Naive thymus-derived CD4-positive, alpha-beta T cell (primary cell): ENCODE measurements at regions of chr13 and their contacts with region 1.

Region 1: DNA sequence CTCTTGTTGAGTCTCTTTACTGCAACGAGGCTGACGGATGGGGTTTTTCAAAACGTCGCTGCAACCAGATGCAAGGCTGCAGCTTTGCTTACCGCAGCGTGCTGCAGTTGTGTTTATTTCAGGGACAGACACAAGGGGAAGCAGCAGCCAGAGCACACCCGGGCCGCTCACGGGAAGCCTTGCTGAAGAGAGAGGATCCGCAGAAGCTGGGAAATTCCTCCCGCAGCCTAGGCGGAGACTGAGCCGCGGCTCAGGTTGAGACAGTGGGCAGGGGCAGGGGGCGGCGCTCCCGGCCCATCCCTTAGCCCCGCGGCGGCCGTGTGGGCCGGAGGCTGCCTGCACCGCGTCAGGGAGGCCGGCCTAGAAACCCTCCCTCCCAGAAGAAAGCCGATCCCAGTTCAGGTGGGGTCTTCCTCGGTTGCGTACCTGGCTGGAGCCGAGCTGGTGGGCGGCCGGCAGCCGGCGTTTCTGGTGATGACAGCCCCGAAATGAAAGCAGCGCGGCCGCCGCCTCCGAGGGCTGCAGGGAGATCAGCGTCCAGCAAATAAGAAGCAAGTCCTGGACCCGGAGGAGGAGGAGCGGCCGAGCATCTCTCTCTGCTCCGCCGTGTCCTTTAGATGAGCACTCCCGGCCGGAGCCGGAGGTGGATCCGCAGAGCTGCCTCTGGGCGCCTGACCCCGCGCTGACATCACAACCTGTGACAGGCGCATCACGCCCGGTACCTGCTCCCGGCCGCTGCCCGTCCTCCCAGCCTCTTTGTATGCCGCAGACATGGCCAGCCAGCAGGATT is at the start of gene FRY:
- DNase-seq: peak; percentile 34 to 67 (median 58)
- ATAC-seq: peak; percentile 86
- H3K4me3 ChIP-seq: peak within 1 kb of the TSS; percentile 71
- H3K4me3 Mint-ChIP-seq: peak within 1 kb of the TSS; percentile 82 to 99 (median 90)
- H3K27ac ChIP-seq: peak within 1 kb of the TSS; percentile 72
- H3K27ac Mint-ChIP-seq: peak within 1 kb of the TSS; percentile 77 to 97 (median 83)
- H3K4me1 ChIP-seq: peaks cover 3 to 16% of the 10 kb centered on the region in 2 donors
- H3K4me1 Mint-ChIP-seq: peaks cover 7 to 65% (median 49%) of the 10 kb centered on the region in 7 donors
- H3K27me3 ChIP-seq: no peaks in the 10 kb centered on the region
- H3K27me3 Mint-ChIP-seq: peaks cover 7 to 49% (median 13%) of the 10 kb centered on the region in 5 donors
- total RNA-seq, gene FRY: 9.9 to 39.9 (median 24.0) TPM

Region 2: DNA sequence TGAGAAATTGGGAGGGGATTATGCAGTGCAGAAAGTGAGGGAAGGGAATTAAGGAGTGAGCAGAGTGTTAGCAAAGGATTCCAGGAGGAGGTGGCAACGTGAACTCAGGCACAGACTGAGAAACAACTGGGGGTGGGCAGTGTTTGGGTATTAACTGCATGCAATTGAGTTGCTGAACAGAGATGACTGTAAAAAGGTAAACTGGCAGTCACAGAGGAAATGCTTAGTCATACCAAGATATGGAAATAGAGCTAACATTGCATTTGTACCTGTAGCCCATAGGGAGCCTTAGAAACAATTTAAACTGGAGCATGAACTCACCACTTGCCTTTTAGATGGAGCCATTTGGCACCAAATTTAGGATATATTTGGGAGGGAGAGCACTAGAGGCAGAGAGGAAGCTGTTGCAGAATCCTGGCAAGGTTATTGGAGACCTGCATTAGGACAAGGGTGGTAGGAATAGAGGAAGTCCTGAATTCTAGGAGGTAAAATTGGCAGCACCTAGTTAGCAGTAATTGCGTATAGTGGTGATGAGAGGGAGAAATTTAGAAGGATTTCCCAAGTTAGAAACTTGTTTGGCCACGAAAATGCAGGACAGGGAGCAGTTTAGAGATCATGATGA is 100.2 kb before region 1 on chr13:
- CTCF ChIA-PET with region 1: no interaction called
- POLR2A ChIA-PET with region 1: no interaction called
- intact Hi-C with region 1: loop called in 1 of 2 experiments (anchors 5 kb)
- DNase-seq: peak in 1 of 9 donors; percentile 24
- ATAC-seq: no peak
- H3K4me3 ChIP-seq: no peak overlapping the region
- H3K4me3 Mint-ChIP-seq: no peak overlapping the region
- H3K27ac ChIP-seq: no peak overlapping the region
- H3K27ac Mint-ChIP-seq: no peak overlapping the region
- H3K4me1 ChIP-seq: peaks cover 0 to 4% of the 10 kb centered on the region in 2 donors
- H3K4me1 Mint-ChIP-seq: peaks cover 0 to 22% (median 0%) of the 10 kb centered on the region in 7 donors
- H3K27me3 ChIP-seq: no peaks in the 10 kb centered on the region
- H3K27me3 Mint-ChIP-seq: peaks cover 0 to 19% (median 6%) of the 10 kb centered on the region in 5 donors

Region 3: DNA sequence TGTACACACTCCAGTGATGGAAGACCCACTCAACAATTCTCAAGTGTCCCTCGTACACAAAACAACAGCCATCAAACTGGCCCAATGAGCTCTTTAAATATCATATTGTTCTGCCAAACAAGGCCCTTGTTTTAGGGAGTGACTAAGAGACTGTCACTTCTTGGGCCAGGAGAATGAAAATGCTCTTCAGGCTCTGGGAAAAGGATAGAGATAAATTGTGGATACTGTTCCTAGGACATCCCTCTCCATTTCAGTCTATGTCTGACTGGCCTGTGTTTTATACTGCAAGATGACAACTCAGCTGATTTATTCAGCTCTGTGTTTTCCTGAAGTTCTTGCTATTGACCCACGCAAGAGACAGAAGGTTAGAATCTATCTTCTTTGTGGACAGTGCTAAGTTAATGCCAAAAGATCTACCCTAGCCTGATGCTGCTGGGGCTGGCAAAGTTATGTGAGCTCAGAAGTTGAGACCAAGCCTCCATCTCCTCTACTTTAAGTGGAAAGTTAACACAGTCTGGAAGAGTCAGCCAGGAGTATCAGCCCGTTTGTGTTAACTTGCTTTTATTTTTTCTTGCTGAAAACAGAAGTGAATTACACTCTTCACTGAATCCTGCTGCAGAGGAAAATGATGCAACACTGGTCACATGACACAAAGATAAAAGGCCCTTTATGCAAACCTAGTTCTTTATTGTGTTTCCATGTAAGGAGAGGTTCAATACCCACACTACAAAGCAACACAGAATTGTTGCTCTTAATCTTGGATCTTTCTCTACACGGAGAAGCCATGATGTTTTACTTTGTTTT is 15.0 kb after region 1 on chr13:
- CTCF ChIA-PET with region 1: interaction called, 4 read pairs
- POLR2A ChIA-PET with region 1: interaction called, 23 read pairs
- intact Hi-C with region 1: loop called (anchors 1 to 2 kb)
- DNase-seq: peak in 6 of 9 donors; percentile 24 to 55 (median 51)
- ATAC-seq: peak; percentile 65
- H3K4me3 ChIP-seq: no peak overlapping the region
- H3K4me3 Mint-ChIP-seq: peak overlapping the region in 9 of 10 donors; percentile 20 to 72 (median 65)
- H3K27ac ChIP-seq: no peak overlapping the region
- H3K27ac Mint-ChIP-seq: peak overlapping the region; percentile 23 to 86 (median 76)
- H3K4me1 ChIP-seq: peaks cover 0 to 48% of the 10 kb centered on the region in 2 donors
- H3K4me1 Mint-ChIP-seq: peaks cover 10 to 79% (median 62%) of the 10 kb centered on the region in 7 donors
- H3K27me3 ChIP-seq: no peaks in the 10 kb centered on the region
- H3K27me3 Mint-ChIP-seq: peaks cover 0 to 15% (median 0%) of the 10 kb centered on the region in 5 donors

Region 4: DNA sequence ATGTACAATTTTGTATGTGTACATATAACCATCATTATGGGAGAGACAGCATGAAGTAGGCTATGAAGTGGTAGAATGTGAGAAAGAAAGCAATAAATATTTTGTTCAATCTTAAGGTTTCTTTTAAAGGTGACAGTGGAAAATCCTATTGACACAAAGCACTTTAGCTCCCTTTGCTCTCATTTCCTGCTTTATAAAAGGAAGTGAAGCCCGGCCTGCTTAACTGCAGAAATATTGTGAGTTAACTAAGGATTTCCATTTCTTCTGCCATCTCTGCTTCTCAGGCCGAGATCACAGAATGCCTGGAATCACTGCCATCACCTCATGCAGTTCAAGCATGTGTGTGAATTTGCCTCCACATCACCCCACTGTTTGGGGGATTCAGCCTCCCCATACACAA is 83.8 kb after region 1 on chr13:
- CTCF ChIA-PET with region 1: no interaction called
- POLR2A ChIA-PET with region 1: interaction called, 3 read pairs
- intact Hi-C with region 1: loop called in 1 of 2 experiments (anchors 2 kb)
- DNase-seq: peak in 2 of 9 donors; percentile 2 to 3
- ATAC-seq: no peak
- H3K4me3 ChIP-seq: no peak overlapping the region
- H3K4me3 Mint-ChIP-seq: peak overlapping the region in 3 of 10 donors; percentile 16 to 53 (median 19)
- H3K27ac ChIP-seq: no peak overlapping the region
- H3K27ac Mint-ChIP-seq: peak overlapping the region in 2 of 9 donors; percentile 11 to 63
- H3K4me1 ChIP-seq: peaks cover 0 to 3% of the 10 kb centered on the region in 2 donors
- H3K4me1 Mint-ChIP-seq: peaks cover 0 to 34% (median 23%) of the 10 kb centered on the region in 7 donors
- H3K27me3 ChIP-seq: no peaks in the 10 kb centered on the region
- H3K27me3 Mint-ChIP-seq: no peaks in the 10 kb centered on the region

Region 5: GRCh38 chr13:32164622-32165268 is 133.5 kb after region 1 on chr13:
- CTCF ChIA-PET with region 1: no interaction called
- POLR2A ChIA-PET with region 1: no interaction called
- intact Hi-C with region 1: loop called in 1 of 2 experiments (anchors 2 kb)
- DNase-seq: peak in 6 of 9 donors; percentile 3 to 47 (median 32)
- ATAC-seq: peak; percentile 63
- H3K4me3 ChIP-seq: no peak overlapping the region
- H3K4me3 Mint-ChIP-seq: no peak overlapping the region
- H3K27ac ChIP-seq: no peak overlapping the region
- H3K27ac Mint-ChIP-seq: peak overlapping the region in 2 of 9 donors; percentile 14 to 17
- H3K4me1 ChIP-seq: no peaks in the 10 kb centered on the region
- H3K4me1 Mint-ChIP-seq: peaks cover 0 to 2% (median 0%) of the 10 kb centered on the region in 7 donors
- H3K27me3 ChIP-seq: no peaks in the 10 kb centered on the region
- H3K27me3 Mint-ChIP-seq: no peaks in the 10 kb centered on the region

Region 6: DNA sequence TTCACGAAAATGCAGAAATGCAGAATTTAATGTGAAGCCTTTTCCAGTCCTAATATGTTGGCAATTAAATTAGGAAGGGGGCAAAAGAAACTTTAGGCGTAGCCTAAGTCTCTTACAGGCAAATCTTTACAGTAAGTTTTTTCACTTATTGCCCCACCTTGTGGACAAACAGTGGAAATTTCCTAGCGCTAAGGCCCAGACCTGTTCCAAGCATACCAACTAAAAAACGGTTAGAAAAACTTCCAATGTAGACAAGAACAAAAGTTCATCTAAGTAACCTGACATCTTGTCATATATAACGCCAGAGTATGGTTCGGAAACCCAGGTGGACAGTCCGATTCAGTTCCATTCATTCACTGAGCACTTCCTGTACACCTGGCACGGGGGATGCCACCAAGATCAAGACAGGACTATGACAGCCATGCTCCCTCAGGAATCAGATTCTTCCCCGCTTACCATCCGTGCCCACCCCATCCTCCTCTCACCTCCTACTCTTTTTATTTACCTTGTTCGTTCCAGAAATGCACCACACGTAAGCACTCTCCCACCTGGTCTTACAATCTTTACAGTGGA is 279.0 kb after region 1 on chr13:
- CTCF ChIA-PET with region 1: no interaction called
- POLR2A ChIA-PET with region 1: interaction called, 5 read pairs
- intact Hi-C with region 1: loop called in 1 of 2 experiments (anchors 1 kb)
- DNase-seq: peak in 7 of 9 donors; percentile 16 to 64 (median 51)
- ATAC-seq: peak; percentile 58
- H3K4me3 ChIP-seq: no peak overlapping the region
- H3K4me3 Mint-ChIP-seq: peak overlapping the region in 7 of 10 donors; percentile 10 to 61 (median 28)
- H3K27ac ChIP-seq: no peak overlapping the region
- H3K27ac Mint-ChIP-seq: peak overlapping the region in 1 of 9 donors; percentile 18
- H3K4me1 ChIP-seq: peaks cover 5 to 7% of the 10 kb centered on the region in 2 donors
- H3K4me1 Mint-ChIP-seq: peaks cover 13 to 28% (median 14%) of the 10 kb centered on the region in 7 donors
- H3K27me3 ChIP-seq: no peaks in the 10 kb centered on the region
- H3K27me3 Mint-ChIP-seq: peaks cover 0 to 2% (median 0%) of the 10 kb centered on the region in 5 donors

Region 7: GRCh38 chr13:32427852-32428580 is 396.8 kb after region 1 on chr13 and contains the start of gene N4BP2L1:
- CTCF ChIA-PET with region 1: no interaction called
- POLR2A ChIA-PET with region 1: no interaction called
- intact Hi-C with region 1: loop called (anchors 5 kb)
- DNase-seq: peak; percentile 60 to 91 (median 78)
- ATAC-seq: peak; percentile 81
- H3K4me3 ChIP-seq: peak within 1 kb of the TSS; percentile 64
- H3K4me3 Mint-ChIP-seq: peak within 1 kb of the TSS; percentile 90 to 100 (median 94)
- H3K27ac ChIP-seq: peak within 1 kb of the TSS; percentile 98
- H3K27ac Mint-ChIP-seq: peak within 1 kb of the TSS; percentile 95 to 99 (median 97)
- H3K4me1 ChIP-seq: peaks cover 19 to 20% of the 10 kb centered on the region in 2 donors
- H3K4me1 Mint-ChIP-seq: peaks cover 34 to 50% (median 48%) of the 10 kb centered on the region in 7 donors
- H3K27me3 ChIP-seq: no peaks in the 10 kb centered on the region
- H3K27me3 Mint-ChIP-seq: no peaks in the 10 kb centered on the region
- total RNA-seq, gene N4BP2L1: 30.4 to 58.0 (median 47.1) TPM